Astrocyte of the cerebellum (primary cell): ENCODE measurements at regions of chr16 and their contacts with region 1.

Region 1: DNA sequence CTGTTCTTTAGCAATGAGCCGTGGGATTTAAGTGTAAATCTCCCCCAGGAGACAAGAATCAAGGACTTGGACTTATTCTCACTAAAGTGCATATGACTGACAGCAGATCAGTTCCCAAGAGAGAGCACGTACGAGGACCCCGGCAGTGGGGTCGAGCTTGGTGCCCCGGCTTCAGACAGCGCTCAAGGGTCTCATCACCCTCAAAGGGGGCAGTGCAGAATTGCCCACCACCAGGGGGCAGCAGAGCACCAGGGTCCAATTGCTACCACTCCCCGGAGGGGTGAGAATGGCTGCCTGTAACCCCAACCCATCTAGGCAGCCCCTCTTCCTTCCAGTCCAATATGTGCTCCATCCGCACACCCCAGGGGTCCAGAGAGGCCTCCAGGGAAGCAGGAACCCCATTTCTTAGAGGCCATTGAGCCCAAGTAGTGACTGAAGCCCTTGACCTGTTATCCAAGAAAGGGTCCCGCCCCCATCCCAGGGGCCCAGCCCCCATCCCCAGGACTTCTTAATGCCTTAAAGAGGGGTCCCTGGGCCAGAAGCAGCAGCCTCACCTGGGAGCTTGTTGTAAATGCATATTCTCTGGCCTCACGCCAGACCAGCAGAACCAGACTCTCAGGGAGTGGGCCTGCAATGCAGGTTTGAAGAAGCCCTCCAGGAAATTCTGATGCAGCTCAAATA is 86.1 kb downstream of the ZDHHC7 start:
- DNase-seq: no peak
- H3K4me3 ChIP-seq: no peak overlapping the region
- CTCF ChIP-seq: peak; percentile 66

Region 2: DNA sequence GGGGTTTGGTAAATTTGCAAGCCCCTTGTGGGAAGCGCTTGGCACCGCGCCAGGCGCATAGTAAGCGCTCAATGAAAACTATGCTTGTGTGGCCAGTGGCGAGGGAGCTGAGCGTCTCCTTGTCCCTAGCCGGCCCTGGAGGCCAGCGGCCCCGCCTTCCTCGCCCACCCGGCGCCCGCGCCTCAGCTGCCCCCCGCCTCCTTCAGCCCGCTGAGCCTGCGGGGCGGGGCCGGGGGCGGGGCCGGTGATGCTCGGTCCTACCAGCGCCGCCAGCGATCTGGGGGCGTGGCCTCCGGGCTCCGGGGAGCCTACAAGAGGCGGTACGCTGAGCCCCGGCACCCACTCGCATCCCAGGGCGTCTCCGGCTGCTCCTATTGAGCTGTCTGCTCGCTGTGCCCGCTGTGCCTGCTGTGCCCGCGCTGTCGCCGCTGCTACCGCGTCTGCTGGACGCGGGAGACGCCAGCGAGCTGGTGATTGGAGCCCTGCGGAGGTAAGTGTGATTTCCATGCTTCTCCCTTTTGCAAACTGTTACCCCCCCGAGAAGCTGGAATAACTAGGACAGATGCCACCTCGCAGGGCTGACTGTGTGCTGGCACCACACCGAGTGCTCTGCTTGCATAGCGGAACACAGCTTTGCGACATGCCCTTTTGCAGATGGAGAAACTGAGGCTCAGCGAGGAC is 105.4 kb before region 1 on chr16 and contains the start of gene CRISPLD2:
- in situ Hi-C with region 1: loop called (anchors 10 kb)
- DNase-seq: peak; percentile 53
- H3K4me3 ChIP-seq: peak within 1 kb of the TSS; percentile 52
- CTCF ChIP-seq: no peak

Region 3: GRCh38 chr16:84879569-84880487 is 45.4 kb before region 1 on chr16:
- in situ Hi-C with region 1: loop called (anchors 5 kb)
- DNase-seq: no peak
- H3K4me3 ChIP-seq: no peak overlapping the region
- CTCF ChIP-seq: no peak

Region 4: DNA sequence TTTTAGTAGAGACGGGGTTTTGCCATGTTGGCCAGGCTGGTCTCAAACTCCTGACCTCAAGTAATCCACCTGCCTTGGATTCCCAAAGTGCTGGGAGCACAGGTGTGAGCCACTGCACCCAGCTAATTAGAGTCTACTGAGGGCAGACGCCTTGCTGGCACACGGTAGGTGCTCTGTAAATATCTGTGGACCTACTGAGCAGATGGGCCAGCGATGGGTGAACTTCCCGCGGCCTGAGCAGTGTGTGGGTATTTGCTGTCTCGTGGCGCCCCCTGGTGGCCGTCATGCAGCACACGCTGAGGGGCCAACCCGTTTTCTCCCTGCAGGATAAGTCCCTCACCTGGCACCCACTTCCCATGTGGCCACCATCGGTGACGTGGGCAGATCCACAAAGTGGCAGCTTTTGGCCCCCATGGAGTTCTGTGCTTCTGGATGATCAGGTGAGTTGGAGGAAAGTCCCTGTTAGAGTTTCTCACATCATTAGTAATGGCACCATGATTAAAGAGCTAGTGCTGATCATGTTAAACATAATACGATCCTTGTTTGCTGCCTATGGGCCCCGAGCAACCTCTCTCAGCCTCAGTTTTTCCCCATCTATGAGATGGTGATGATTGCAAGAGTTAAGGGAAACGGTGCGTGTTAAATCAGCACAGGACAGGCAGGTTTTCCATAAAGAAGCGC is 45.4 kb after region 1 on chr16:
- in situ Hi-C with region 1: no loop called
- DNase-seq: peak; percentile 41
- H3K4me3 ChIP-seq: no peak overlapping the region
- CTCF ChIP-seq: peak; percentile 88

Region 5: DNA sequence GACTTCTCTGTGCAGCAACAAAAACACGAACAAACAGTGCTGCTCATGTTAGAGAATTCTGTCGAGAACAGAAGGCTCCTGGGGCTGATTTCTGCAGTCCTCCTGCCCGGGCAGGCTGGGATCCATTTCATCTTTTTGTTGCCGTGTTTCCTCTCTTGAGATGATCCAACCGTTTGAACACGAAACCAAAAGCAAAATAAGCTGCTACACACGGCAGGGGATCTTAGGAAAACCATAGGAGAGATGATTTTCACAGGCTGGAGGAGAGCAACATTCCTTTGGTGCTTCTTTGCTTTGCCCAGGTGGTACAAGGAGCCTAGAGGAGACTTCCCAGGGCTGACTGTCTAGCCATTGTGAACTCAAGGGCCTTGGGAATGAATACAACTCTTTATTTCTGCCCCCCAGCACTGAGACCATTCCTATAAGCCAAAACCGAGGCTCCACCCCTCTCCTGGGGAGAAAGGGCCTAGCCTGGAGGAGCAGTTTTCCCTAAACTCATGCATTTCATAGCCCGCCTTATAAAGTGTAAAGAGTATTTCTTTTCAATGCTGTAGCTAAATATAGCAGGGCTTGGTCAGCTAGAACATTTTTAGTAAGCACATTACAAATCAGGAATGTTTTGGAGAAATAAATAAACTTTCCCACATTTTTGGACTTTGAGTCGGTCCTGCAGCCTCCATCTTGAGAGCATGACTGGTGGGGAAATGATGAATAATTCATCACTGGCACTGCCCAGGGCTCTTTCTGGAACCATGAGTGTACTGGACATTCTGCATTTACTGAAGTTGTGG is 1660.8 kb after region 1 on chr16:
- in situ Hi-C with region 1: no loop called
- DNase-seq: peak; percentile 89
- H3K4me3 ChIP-seq: peak overlapping the region; percentile 10
- CTCF ChIP-seq: no peak